ENCODE measurements at regions of chr2 and their contacts with region 1.

Region 1: DNA sequence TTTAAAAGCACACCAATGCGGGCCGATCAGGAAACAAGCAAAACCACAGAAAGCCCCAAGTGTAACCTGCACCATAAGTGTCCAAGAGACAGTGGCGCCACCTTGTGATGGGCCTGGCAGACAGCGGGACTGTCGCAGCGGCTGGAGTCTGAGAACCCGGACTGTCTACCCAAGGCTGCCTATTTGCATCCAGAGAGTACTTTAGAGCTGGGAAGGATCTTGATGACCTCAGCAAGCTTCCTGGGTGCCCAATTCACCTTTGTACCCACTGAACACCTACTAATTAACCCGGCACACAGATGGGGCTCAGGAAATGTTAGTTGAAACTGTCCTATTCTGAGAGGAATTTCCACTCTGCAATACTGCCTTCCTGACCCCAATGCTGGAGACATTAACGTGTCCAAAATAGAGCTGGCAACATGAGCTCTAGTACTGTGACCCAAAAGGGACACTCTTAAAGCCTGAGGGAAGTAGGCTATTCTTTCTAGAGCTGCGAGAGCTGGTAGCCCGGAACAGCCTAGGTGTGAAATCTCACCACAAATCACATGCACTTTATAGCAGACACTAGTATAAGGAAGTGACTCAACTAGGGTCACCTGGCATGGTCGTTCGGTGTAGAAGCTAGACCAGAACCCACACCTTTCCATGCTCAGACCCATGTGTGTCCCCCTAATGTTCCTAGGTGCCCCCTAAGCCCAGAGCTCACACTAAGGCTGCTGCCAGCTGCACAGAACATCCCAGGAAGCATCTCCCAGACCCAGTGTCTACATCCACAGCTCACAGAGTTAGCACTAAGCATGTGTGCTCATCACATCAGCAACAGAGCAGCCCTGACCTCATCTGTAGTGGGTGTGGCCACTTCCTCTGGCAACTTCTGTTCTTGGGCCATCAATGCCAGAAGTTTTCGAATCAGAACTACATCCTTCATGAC is 25.4 kb downstream of the POLR1A start:
- DNase-seq: peak; percentile 72 to 84 (median 83)
- H3K4me3 ChIP-seq: no peak overlapping the region
- H3K27ac ChIP-seq: no peak overlapping the region
- H3K4me1 ChIP-seq: peaks cover 0 to 14% (median 6%) of the 10 kb centered on the region in 4 experiments
- H3K27me3 ChIP-seq: no peaks in the 10 kb centered on the region

Region 2: DNA sequence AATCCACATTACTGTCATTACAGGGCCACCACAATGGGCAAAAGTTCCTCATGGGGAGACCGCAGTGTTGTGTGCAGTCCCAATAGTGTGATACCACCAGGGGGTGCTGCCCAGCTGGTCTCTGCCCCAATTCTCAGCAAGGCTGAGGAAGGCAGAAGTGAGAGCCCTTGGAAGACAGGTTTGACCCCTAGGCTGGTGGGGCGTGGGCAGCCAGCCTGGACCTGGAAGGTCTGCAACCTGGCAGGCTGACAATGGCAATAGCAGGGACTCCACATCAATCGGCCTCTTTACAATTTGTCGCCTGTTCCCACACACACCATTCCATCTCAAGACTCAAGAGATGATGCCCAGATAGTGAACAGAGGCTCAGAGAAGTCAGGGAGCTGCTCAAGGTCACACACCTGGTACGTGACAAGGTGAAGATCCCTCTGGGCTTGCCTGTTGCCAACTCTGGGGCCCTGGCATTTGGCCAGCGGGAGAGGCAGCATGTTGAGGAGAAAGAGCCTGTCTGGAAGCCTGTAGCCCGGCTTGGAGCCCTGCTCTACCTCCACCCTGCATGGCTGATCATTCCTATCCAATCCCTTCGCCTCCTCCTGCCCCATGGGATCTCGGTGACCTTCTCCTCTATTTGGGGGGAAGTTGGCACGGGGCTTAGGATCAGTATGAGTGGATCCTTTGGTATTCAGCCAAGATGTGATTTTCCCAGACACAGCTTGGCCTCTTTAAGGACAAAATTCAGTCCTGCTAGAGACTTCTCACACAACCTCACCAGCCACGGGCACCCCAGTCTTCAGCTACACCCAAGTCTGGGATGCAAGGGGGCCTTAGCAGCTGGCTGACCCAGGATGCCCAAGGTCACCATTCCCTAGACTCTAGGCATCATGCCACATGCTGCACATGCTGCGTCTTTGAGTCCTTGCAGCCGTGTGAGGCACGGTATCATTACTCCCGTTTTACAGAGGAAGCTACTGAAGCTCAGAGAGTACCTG is 329.4 kb before region 1 on chr2:
- CTCF ChIA-PET with region 1: interaction called, 20 read pairs
- POLR2A ChIA-PET with region 1: no interaction called
- DNase-seq: peak; percentile 76 to 87 (median 81)
- H3K4me3 ChIP-seq: no peak overlapping the region
- H3K27ac ChIP-seq: no peak overlapping the region
- H3K4me1 ChIP-seq: peaks cover 0 to 30% (median 26%) of the 10 kb centered on the region in 4 experiments
- H3K27me3 ChIP-seq: peaks cover 0 to 71% (median 32%) of the 10 kb centered on the region in 5 experiments

Region 3: DNA sequence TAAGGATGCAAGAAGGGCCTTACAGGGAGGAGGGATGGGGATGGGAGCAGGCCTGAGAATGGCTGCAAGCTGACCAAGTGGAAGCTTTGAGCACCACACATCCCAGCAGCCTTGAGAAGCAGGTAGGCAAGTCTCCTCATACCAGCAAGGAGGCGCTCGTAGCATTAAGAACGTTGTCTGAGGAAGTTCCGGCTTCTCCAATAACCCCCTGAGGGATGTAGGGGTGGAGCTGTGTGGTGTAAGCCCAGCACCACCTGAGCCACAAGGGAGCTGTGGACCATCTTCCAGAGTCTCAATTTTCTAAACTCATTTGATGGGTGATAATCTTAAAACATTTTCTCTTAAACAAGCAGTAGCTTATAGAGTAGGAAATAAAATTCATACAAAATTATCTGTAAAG is 242.1 kb before region 1 on chr2:
- CTCF ChIA-PET with region 1: interaction called, 17 read pairs
- POLR2A ChIA-PET with region 1: no interaction called
- DNase-seq: no peak
- H3K4me3 ChIP-seq: no peak overlapping the region
- H3K27ac ChIP-seq: no peak overlapping the region
- H3K4me1 ChIP-seq: no peaks in the 10 kb centered on the region
- H3K27me3 ChIP-seq: no peaks in the 10 kb centered on the region

Region 4: GRCh38 chr2:85888684-85889626 is 191.3 kb before region 1 on chr2 and contains the start of gene ST3GAL5:
- CTCF ChIA-PET with region 1: interaction called, 68 read pairs
- POLR2A ChIA-PET with region 1: interaction called, 3 read pairs
- DNase-seq: peak; percentile 87 to 95 (median 94)
- H3K4me3 ChIP-seq: peak within 1 kb of the TSS; percentile 53 to 88 (median 84)
- H3K27ac ChIP-seq: peak within 1 kb of the TSS in 1 of 2 experiments; percentile 79
- H3K4me1 ChIP-seq: peaks cover 23 to 71% (median 60%) of the 10 kb centered on the region in 4 experiments
- H3K27me3 ChIP-seq: peaks cover 0 to 1% (median 0%) of the 10 kb centered on the region in 5 experiments

Region 5: DNA sequence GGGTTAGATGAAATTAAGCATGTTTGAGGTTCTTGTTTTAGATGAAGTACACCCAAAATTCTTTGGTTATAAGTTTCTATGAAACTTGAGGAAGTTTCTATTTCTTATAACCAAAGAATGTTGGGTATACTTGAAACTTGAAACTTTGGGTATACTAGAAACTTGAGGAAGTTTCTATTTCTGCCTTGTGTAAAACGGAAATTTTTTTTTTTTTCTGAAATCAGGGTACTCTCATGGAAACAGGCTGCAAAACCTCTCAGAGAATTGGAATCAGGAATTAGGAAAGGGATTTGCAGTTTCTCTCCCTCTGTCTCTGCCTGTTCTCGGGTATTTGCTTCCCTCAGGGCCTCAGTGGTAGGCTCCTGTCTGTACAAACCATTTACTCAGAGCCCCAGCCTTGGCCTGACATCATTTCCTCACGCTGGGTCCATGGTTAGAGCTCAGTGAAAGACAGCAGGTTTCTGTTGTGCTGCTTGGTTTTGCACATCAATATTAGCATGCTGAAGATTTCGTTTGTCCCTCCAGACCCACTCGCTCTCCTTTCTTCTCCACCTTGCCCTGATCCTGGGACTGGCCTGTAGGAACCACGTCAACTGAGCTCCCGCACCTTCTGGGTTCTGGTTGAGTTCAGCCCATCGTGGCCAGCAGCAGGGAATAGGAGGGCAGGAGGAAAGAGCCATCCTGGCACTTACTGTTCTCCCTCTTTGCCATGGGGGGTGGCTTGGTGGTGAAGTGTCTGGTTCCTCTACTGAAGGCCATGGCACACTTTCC is 81.0 kb before region 1 on chr2:
- CTCF ChIA-PET with region 1: no interaction called
- POLR2A ChIA-PET with region 1: no interaction called
- DNase-seq: peak in 2 of 3 donors; percentile 60 to 75
- H3K4me3 ChIP-seq: peak overlapping the region in 3 of 7 experiments; percentile 0 to 42 (median 2)
- H3K27ac ChIP-seq: peak overlapping the region; percentile 5 to 25
- H3K4me1 ChIP-seq: peaks cover 21 to 83% (median 56%) of the 10 kb centered on the region in 4 experiments
- H3K27me3 ChIP-seq: no peaks in the 10 kb centered on the region

Region 6: GRCh38 chr2:86011449-86011941 is 68.8 kb before region 1 on chr2:
- CTCF ChIA-PET with region 1: no interaction called
- POLR2A ChIA-PET with region 1: no interaction called
- DNase-seq: no peak
- H3K4me3 ChIP-seq: no peak overlapping the region
- H3K27ac ChIP-seq: no peak overlapping the region
- H3K4me1 ChIP-seq: peaks cover 0 to under 1% (median 0%) of the 10 kb centered on the region in 4 experiments
- H3K27me3 ChIP-seq: no peaks in the 10 kb centered on the region

Region 7: GRCh38 chr2:86035883-86036668 is 44.2 kb before region 1 on chr2:
- CTCF ChIA-PET with region 1: interaction called, 11 read pairs
- POLR2A ChIA-PET with region 1: no interaction called
- DNase-seq: peak; percentile 70 to 90 (median 84)
- H3K4me3 ChIP-seq: peak overlapping the region in 4 of 7 experiments; percentile 25 to 50 (median 34)
- H3K27ac ChIP-seq: peak overlapping the region; percentile 40 to 82
- H3K4me1 ChIP-seq: peaks cover 17 to 62% (median 52%) of the 10 kb centered on the region in 4 experiments
- H3K27me3 ChIP-seq: no peaks in the 10 kb centered on the region

Region 8: DNA sequence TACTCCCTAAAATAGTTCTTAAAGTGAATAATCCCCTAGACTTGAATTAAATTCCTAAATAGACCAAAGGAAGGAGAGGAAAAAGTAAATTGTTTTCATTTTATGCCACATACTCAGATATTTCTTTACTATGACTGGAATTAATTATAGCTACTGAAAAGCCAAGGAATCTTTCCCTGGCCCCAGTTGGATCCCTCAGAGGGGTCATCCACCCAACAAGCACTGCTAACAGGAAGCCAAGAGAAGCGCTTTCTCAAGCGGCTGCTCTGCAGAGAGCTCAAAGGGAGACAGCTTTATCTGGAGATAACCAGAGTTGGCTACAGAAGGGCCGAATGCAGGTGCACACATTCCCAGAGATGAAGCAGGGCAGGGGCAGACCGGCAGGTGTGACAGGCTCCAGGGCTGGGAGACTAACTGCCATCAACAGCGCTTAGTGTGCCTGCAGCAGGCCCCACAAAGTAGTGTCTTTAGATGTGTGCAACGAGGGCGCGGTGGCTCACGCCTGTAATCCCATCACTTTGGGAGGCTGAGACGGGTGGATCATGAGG is 25.6 kb before region 1 on chr2:
- CTCF ChIA-PET with region 1: interaction called, 19 read pairs
- POLR2A ChIA-PET with region 1: no interaction called
- DNase-seq: no peak
- H3K4me3 ChIP-seq: no peak overlapping the region
- H3K27ac ChIP-seq: no peak overlapping the region
- H3K4me1 ChIP-seq: no peaks in the 10 kb centered on the region
- H3K27me3 ChIP-seq: no peaks in the 10 kb centered on the region

Region 9: GRCh38 chr2:86068136-86068588 is 12.1 kb before region 1 on chr2:
- CTCF ChIA-PET with region 1: interaction called, 13 read pairs
- POLR2A ChIA-PET with region 1: no interaction called
- DNase-seq: peak; percentile 18 to 54 (median 33)
- H3K4me3 ChIP-seq: no peak overlapping the region
- H3K27ac ChIP-seq: no peak overlapping the region
- H3K4me1 ChIP-seq: peaks cover 0 to 20% (median 16%) of the 10 kb centered on the region in 4 experiments
- H3K27me3 ChIP-seq: no peaks in the 10 kb centered on the region

Measured in common myeloid progenitor, CD34-positive (primary cell).